Left lung (tissue), 14 donors: ENCODE measurements at regions of chr6 and their contacts with region 1.

Region 1: DNA sequence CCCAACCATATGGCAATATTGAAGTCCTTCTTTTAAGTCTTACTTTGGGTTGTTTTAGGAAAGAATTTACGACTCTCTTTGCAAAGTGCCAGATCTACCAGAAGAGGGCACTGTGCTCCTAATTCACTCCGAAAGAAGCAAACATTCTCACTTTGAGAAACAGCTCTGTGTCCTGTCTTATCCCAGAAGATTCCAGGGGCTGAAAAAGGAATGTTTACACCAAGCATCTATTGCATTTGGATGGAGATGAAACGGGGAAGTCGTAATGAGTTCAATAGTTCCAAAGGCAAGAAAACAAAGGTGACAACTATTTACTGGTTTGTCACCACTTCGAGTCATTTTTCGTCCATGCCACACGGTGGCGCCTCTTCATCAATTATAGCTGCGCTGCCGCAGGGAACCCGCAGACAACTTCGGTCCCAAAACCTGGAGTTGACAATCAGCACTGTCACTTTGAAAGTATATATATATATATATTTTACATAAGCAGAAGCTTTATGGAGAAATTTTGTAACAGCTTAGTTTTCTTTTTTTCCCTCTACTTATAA is 121.6 kb downstream of the MOXD1 start:
- DNase-seq: peak; percentile 69 to 84 (median 81)
- ATAC-seq: peak; percentile 98
- H3K4me3 ChIP-seq: peak overlapping the region in 1 of 2 donors; percentile 14
- H3K27ac ChIP-seq: no peak overlapping the region
- H3K4me1 ChIP-seq: no peaks in the 10 kb centered on the region
- H3K27me3 ChIP-seq: peaks cover 0 to 8% of the 10 kb centered on the region in 2 donors
- CTCF ChIP-seq: peak; percentile 79 to 85

Region 2: GRCh38 chr6:132483779-132484679 is 204.4 kb after region 1 on chr6:
- intact Hi-C with region 1: loop called in 1 of 2 experiments (anchors 10 kb)
- DNase-seq: peak in 2 of 4 donors; percentile 69 to 80
- ATAC-seq: peak; percentile 91
- H3K4me3 ChIP-seq: no peak overlapping the region
- H3K27ac ChIP-seq: no peak overlapping the region
- H3K4me1 ChIP-seq: peaks cover 0 to 35% of the 10 kb centered on the region in 2 donors
- H3K27me3 ChIP-seq: no peaks in the 10 kb centered on the region
- CTCF ChIP-seq: peak; percentile 59 to 63